GM10248 (cell line): ENCODE measurements at regions of chr3 and their contacts with region 1.

Region 1: DNA sequence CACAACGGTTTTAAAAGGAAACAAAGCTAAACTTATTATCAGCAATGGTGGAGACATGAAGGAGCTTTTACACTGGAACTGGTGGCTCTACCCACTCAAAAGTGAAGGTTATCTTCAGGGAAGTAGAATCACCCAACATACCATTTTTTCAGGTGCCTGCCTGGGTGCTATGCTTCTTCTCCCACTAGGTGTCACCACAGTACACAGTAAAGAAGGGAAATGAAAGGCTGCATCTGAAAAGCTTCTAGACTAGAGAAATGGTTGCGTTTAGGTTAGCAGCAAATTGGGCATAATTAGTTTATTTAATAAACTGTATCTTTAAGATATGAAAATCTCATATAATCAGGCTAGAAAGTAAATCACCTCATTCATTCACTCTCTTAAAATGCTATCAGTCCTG is 47.0 kb upstream of the SELENOK start:
- DNase-seq: peak; percentile 56
- CTCF ChIP-seq: peak; percentile 86

Region 2: GRCh38 chr3:53921296-53921695 is 17.3 kb before region 1 on chr3:
- CTCF ChIA-PET with region 1: interaction called, 25 read pairs
- POLR2A ChIA-PET with region 1: no interaction called
- DNase-seq: peak; percentile 24
- CTCF ChIP-seq: peak; percentile 33

Region 3: GRCh38 chr3:54374214-54374855 is 435.7 kb after region 1 on chr3:
- CTCF ChIA-PET with region 1: interaction called, 19 read pairs
- POLR2A ChIA-PET with region 1: no interaction called
- DNase-seq: peak; percentile 27
- CTCF ChIP-seq: peak; percentile 24